Heart left ventricle (tissue), 16 donors: ENCODE measurements at regions of chr13 and their contacts with region 1.

Region 1: GRCh38 chr13:40666045-40666904 is at the start of gene FOXO1:
- DNase-seq: peak; percentile 93 to 95 (median 94)
- ATAC-seq: peak; percentile 83 to 91 (median 84)
- H3K4me3 ChIP-seq: peak within 1 kb of the TSS; percentile 72 to 99 (median 94)
- H3K27ac ChIP-seq: peak within 1 kb of the TSS; percentile 94 to 99 (median 99)
- H3K4me1 ChIP-seq: peaks cover 6 to 43% (median 36%) of the 10 kb centered on the region in 12 donors
- H3K27me3 ChIP-seq: no peaks in the 10 kb centered on the region
- CTCF ChIP-seq: peak in 1 of 12 donors; percentile 2
- POLR2A ChIP-seq: peak; percentile 72 to 97
- total RNA-seq, gene FOXO1: 9.8 to 26.8 (median 18.5) TPM

Region 2: GRCh38 chr13:40069173-40070044 is 596.9 kb before region 1 on chr13:
- intact Hi-C with region 1: loop called in 3 of 10 experiments (anchors 5 kb)
- DNase-seq: peak; percentile 76 to 80 (median 77)
- ATAC-seq: peak; percentile 90 to 96 (median 94)
- H3K4me3 ChIP-seq: peak overlapping the region in 4 of 12 donors; percentile 15 to 38 (median 23)
- H3K27ac ChIP-seq: peak overlapping the region in 2 of 12 donors; percentile 11 to 22
- H3K4me1 ChIP-seq: peaks cover 0 to 10% (median 5%) of the 10 kb centered on the region in 12 donors
- H3K27me3 ChIP-seq: no peaks in the 10 kb centered on the region
- CTCF ChIP-seq: peak; percentile 75 to 94 (median 86)
- POLR2A ChIP-seq: no peak

Region 3: DNA sequence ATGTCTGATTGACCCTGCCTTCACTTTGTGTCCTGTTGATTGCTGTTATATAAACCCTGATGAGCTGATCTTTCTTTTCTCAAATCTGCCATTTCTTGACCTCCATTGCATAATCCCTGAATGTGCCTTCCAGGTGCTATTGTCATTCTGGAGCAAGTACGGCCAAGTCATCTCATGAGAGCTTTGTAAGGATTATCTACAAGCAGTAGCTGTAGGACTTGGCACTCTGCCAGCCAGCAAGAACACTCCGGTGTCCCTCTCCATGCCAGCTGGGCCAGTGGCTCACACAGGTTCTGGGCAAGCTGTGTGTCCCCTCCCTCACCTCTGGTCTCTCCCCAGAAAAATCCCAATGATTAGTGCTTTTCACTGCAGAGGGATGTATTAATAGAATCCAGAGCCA is 347.9 kb before region 1 on chr13:
- intact Hi-C with region 1: loop called in 6 of 10 experiments (anchors 5 to 10 kb)
- DNase-seq: peak; percentile 56 to 81 (median 70)
- ATAC-seq: peak in 3 of 4 donors; percentile 43 to 63 (median 62)
- H3K4me3 ChIP-seq: no peak overlapping the region
- H3K27ac ChIP-seq: no peak overlapping the region
- H3K4me1 ChIP-seq: peaks cover 0 to 27% (median 14%) of the 10 kb centered on the region in 12 donors
- H3K27me3 ChIP-seq: no peaks in the 10 kb centered on the region
- CTCF ChIP-seq: no peak
- POLR2A ChIP-seq: no peak

Region 4: DNA sequence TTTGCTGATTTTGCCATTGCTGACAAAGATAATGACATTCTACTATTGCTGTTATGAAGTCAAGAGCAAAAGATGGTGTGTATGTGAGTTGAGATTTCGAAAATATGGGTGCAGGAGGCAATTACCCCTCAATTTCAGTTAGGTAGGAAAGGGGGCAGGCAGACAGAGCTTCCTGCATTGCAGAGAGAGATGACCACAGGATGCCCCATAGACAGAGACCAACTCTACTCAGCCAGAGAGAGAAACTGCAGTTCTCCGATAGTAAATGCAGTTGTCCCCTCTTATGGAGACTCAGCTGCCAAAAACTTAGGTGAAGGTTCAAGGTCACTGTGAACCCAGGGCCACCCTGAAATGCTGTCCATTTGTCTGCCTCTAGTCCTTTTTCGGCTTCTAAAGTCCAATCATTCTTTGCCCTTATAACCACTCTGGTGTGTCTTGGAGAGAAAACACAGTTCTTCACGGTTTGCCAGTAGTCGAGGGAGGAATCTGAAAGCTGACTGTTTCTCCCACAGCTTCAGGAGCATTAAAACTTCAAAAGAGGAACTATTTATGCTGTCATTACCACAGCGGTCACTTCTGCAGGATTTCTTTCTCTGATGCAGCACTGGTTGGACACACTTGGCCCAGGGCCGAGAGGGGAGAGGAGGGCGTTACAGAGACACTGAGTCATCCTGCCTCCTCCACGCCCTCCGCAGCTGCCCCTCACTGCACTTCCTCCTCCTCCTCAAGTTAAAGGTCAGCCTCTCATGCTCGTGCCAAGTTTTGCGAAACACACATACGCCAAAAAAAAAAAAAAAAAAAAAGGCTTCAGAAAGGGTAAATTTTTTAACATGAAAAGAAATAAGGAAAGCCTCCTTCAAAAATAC is 264.1 kb before region 1 on chr13:
- intact Hi-C with region 1: loop called in 3 of 10 experiments (anchors 5 kb)
- DNase-seq: peak; percentile 92 to 97 (median 97)
- ATAC-seq: peak; percentile 85 to 98 (median 98)
- H3K4me3 ChIP-seq: peak overlapping the region in 6 of 12 donors; percentile 11 to 25 (median 20)
- H3K27ac ChIP-seq: peak overlapping the region; percentile 11 to 76 (median 58)
- H3K4me1 ChIP-seq: peaks cover 4 to 40% (median 28%) of the 10 kb centered on the region in 12 donors
- H3K27me3 ChIP-seq: no peaks in the 10 kb centered on the region
- CTCF ChIP-seq: no peak
- POLR2A ChIP-seq: no peak

Region 5: DNA sequence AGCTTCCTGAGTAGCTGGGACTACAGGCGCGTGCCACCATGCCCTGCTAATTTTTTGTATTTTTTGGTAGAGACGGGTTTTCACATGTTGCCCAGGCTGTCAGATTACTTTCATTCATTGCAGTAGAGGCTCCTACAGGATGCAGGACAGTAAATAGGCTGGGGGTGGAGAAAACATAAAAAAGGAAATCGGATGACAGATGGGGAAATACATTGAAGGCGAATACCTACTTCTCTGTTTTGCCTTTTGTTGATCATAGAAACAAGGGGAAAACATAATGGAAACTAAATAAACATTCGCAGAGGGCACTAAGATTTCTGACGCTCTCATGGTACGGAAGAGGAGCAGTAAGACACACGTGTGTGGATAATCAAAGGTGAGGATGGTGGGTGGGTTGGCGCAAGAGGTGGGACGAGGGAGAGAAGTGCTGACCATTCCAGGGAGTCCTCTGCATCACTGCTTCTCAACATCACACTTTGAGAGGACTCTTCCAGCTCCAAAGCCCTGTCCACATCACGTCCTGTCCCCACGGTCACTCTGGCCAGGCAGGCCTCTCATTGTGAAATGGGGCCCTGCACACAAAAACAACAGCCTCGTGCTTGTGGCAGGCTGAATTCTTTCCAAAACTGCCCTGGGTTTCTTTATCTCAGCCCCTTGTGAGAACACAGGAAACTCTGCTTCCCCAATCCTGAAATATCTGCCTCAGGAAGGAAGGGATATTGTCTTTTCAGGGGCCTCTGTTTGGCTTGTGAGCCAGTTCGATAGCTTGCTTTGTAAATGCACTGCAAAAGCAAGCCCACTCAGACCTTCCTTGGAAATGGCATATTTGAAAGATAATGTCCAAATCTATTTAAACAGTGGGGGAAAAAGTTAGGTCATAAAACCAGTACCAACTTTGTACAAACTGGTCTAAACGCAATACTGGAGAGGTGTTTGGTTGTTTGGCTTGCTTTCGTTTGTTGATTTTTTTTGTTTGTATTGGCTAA is 188.4 kb before region 1 on chr13:
- intact Hi-C with region 1: loop called in 4 of 10 experiments (anchors 5 to 10 kb)
- DNase-seq: peak in 4 of 5 donors; percentile 41 to 68 (median 64)
- ATAC-seq: peak; percentile 40 to 82 (median 64)
- H3K4me3 ChIP-seq: peak overlapping the region in 1 of 12 donors; percentile 5
- H3K27ac ChIP-seq: peak overlapping the region in 11 of 12 donors; percentile 51 to 75 (median 66)
- H3K4me1 ChIP-seq: peaks cover 6 to 53% (median 35%) of the 10 kb centered on the region in 12 donors
- H3K27me3 ChIP-seq: no peaks in the 10 kb centered on the region
- CTCF ChIP-seq: no peak
- POLR2A ChIP-seq: no peak

Region 6: GRCh38 chr13:40494946-40495581 is 171.2 kb before region 1 on chr13:
- intact Hi-C with region 1: loop called in 1 of 10 experiments (anchors 1 kb)
- DNase-seq: no peak
- ATAC-seq: no peak
- H3K4me3 ChIP-seq: no peak overlapping the region
- H3K27ac ChIP-seq: peak overlapping the region in 1 of 12 donors; percentile 54
- H3K4me1 ChIP-seq: peaks cover 0 to 29% (median 16%) of the 10 kb centered on the region in 12 donors
- H3K27me3 ChIP-seq: no peaks in the 10 kb centered on the region
- CTCF ChIP-seq: no peak
- POLR2A ChIP-seq: no peak

Region 7: GRCh38 chr13:40589285-40590109 is 76.8 kb before region 1 on chr13:
- intact Hi-C with region 1: loop called in 4 of 10 experiments (anchors 2 to 10 kb)
- DNase-seq: peak in 4 of 5 donors; percentile 56 to 68 (median 62)
- ATAC-seq: peak; percentile 71 to 92 (median 87)
- H3K4me3 ChIP-seq: peak overlapping the region in 2 of 12 donors; percentile 0 to 12
- H3K27ac ChIP-seq: peak overlapping the region; percentile 16 to 88 (median 66)
- H3K4me1 ChIP-seq: peaks cover 21 to 99% (median 71%) of the 10 kb centered on the region in 12 donors
- H3K27me3 ChIP-seq: no peaks in the 10 kb centered on the region
- CTCF ChIP-seq: no peak
- POLR2A ChIP-seq: no peak